ENCODE measurements at regions of chr7 and their contacts with region 1.

Region 1: GRCh38 chr7:149460493-149461277 is at the start of gene ZNF777:
- DNase-seq: peak; percentile 85 to 89 (median 87)
- ATAC-seq: peak; percentile 98 to 100 (median 99)
- H3K4me3 ChIP-seq: peak within 1 kb of the TSS; percentile 51 to 95 (median 80)
- H3K27ac ChIP-seq: peak within 1 kb of the TSS; percentile 50 to 89 (median 81)
- H3K4me1 ChIP-seq: peaks cover 7 to 28% (median 17%) of the 10 kb centered on the region in 12 donors
- H3K27me3 ChIP-seq: peaks cover 0 to 6% (median 0%) of the 10 kb centered on the region in 9 donors
- CTCF ChIP-seq: peak; percentile 18 to 81 (median 50)
- POLR2A ChIP-seq: peak in 1 of 2 donors; percentile 39
- total RNA-seq, gene ZNF777: 6.5 to 10.7 (median 8.3) TPM

Region 2: DNA sequence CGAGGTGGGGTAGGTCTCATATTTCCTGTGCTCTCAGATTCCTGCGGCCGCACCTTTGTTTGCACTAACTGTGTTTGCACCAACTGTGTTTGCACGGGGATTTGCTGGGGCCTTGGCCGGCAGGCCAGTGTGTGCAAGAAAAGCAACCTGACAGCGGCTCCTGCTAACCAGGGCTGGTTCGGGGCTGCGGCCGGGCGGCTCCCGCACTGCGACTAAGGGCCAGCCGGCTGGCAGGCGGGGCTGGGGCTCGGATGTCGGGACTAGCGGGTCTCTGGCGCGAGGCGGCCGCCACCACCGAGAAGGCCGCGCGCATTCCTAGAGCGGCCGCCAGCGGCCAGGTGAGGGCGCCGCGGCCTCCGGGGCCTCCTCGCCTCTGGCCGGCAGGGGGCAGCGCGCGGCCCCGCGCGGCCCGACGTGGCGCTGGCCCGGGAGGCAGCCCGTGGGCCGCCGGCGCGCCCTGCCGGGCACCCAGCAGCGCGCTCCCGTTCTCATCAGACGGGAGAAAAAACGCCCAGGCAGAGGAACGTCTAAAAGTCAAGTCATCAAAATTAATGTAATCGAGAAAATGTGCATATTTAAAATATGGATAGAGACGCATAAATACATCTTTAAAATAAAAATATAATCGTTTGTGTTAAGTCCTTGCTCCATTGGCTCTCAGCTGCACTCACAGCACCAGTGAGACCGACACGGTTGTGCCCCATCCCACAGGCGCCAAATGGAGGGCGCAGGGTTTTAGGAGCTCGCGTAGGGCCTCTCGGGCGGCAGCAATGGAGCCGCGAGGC is 38.4 kb before region 1 on chr7:
- intact Hi-C with region 1: loop called in 1 of 10 experiments (anchors 2 kb)
- DNase-seq: peak; percentile 60 to 85 (median 61)
- ATAC-seq: peak; percentile 60 to 97 (median 93)
- H3K4me3 ChIP-seq: peak overlapping the region; percentile 29 to 65 (median 54)
- H3K27ac ChIP-seq: peak overlapping the region in 7 of 12 donors; percentile 3 to 77 (median 33)
- H3K4me1 ChIP-seq: peaks cover 0 to 18% (median 7%) of the 10 kb centered on the region in 12 donors
- H3K27me3 ChIP-seq: no peaks in the 10 kb centered on the region
- CTCF ChIP-seq: peak; percentile 1 to 84 (median 52)
- POLR2A ChIP-seq: no peak

Region 3: DNA sequence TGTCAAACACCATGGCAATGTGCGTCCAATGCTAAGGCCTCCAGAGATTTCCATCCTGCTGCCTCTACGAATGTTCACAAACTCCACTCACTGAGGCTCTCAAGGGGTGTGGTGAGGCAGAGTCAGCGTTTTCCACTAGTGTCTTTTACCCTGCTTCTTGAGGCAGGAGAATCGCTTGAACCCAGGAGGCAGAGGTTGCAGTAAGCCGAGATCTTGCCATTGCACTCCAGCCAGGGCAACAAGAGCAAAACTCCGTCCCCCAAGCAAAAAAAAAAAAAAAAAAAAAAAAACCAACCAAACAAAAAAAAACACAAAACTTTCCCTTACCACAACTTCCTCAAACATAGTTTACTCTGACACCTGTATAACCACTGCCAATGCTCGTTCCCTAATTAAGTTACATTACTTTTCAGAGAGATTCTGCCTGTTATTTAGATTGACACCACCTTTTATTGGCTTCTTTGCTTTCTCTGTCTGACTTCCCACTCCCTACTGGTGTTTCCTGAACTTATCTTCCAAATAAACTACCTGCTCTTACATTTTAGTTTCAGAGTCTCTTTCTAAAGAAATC is 139.0 kb after region 1 on chr7:
- intact Hi-C with region 1: loop called in 1 of 10 experiments (anchors 10 kb)
- DNase-seq: no peak
- ATAC-seq: no peak
- H3K4me3 ChIP-seq: no peak overlapping the region
- H3K27ac ChIP-seq: peak overlapping the region in 1 of 12 donors; percentile 18
- H3K4me1 ChIP-seq: peaks cover 0 to 23% (median 6%) of the 10 kb centered on the region in 12 donors
- H3K27me3 ChIP-seq: no peaks in the 10 kb centered on the region
- CTCF ChIP-seq: no peak
- POLR2A ChIP-seq: no peak

Measured in heart left ventricle (tissue), 16 donors.